HEK293 (cell line): ENCODE measurements at regions of chr5 and their contacts with region 1.

Region 1: DNA sequence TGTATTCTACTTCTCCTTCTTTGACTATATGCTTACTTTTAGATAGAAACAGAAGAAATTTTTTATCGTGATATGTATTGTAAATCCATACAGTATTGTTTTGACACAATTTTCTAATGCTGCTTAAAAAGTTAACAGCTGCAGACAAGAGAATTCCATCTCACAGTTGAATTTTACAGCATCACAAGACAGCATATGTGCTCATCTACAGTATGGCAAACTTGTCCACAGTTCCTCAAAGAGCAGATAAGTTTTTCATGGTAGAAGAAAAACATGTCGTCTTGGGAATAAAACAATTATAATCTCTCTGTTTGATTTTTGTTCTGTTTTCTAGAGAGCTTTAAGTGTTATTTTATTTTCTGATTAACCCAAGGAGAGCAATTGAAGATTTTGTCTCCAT is 438.5 kb upstream of the NUDT12 start:
- H3K4me3 ChIP-seq: no peak overlapping the region
- H3K27ac ChIP-seq: no peak overlapping the region
- H3K4me1 ChIP-seq: no peaks in the 10 kb centered on the region
- CTCF ChIP-seq: no peak

Region 2: DNA sequence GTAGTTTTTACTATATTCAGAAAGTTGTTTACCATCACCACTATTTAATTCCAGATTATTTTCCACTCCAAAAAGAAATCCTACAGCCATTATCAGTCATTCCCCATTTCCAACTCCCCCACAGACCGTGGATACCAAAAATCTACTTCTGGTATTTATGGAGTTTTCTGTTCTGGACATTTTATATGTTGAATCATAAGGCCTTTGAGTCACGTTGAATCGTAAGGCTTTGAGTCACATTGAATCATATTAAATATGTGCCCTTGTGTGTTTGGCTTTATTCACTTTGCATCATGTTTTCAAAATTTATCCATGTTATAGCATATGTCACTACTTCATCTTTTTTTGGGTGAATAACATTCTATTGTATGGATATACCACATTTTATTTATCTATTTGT is 15.5 kb after region 1 on chr5:
- CTCF ChIA-PET with region 1: interaction called, 10 read pairs
- POLR2A ChIA-PET with region 1: no interaction called
- H3K4me3 ChIP-seq: no peak overlapping the region
- H3K27ac ChIP-seq: no peak overlapping the region
- H3K4me1 ChIP-seq: no peaks in the 10 kb centered on the region
- CTCF ChIP-seq: no peak